CD8-positive, alpha-beta T cell (primary cell): ENCODE measurements at regions of chr11 and their contacts with region 1.

Region 1: DNA sequence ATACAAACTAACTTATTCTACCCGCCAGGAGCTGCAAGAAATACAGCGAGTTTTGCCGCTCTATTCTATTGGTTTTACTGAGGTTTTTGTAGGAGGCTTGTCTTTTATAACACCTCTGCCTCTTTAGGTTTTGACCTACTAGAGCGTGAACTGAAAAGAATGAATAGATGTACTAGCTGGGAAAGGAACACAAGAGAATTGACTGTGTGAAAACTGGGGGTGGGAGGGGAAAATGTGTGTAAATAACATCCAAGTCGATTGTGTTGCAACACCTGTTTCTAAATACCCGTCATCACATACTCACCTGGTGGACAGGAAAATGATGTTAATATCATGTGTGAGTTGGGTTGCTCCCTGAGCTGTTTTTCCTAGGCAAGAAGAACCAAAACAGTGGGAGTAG is 12.9 kb upstream of the JHY start:
- DNase-seq: no peak
- ATAC-seq: no peak
- H3K4me3 ChIP-seq: no peak overlapping the region
- H3K4me3 Mint-ChIP-seq: no peak overlapping the region
- H3K27ac ChIP-seq: no peak overlapping the region
- H3K27ac Mint-ChIP-seq: peak overlapping the region; percentile 66
- H3K4me1 ChIP-seq: no peaks in the 10 kb centered on the region
- H3K4me1 Mint-ChIP-seq: no peaks in the 10 kb centered on the region
- H3K27me3 ChIP-seq: no peaks in the 10 kb centered on the region
- H3K27me3 Mint-ChIP-seq: no peaks in the 10 kb centered on the region
- CTCF ChIP-seq: no peak

Region 2: DNA sequence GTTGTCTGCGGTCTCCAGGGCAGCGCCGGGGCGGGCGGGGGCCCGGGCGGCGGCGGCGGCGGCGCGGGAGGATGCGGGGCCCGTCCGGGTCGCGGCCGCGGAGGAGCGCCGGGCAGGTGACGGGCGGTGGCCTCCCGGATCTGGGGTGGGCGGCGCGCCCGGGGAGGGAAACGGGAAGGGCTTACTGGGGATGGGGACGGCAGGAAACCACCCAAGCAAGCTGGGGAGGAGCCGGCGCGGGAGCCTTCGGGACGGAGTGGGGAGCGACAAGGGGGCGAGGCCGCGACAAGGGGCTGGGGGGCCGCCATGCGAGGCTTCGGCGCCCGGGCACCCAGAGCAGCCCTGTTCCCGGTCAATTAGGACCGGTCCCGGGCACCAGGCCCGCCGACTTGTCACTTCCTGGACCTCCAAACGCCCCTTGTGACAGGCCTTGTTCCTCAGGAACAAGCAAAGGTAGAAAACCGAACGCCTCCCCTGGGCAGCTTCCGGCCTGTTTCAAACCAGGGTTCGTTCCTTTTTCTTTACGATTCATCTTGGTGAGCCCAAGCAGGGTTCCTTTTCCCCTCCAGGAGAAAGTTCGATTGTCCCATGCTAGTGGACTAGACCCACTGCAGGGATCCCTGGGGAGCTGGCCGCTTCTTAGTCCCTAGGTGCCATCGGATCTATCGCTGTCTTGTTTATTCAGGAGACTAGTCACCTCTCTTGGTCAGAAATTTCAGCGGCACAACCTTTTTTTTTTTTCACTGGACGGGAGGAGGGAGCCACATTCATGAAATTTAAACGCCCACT is 13.4 kb after region 1 on chr11:
- CTCF ChIA-PET with region 1: interaction called, 4 read pairs
- POLR2A ChIA-PET with region 1: no interaction called
- intact Hi-C with region 1: loop called in 1 of 2 experiments (anchors 2 kb)
- DNase-seq: peak; percentile 13 to 72 (median 52)
- ATAC-seq: peak; percentile 79
- H3K4me3 ChIP-seq: peak overlapping the region; percentile 71 to 83
- H3K4me3 Mint-ChIP-seq: peak overlapping the region; percentile 85
- H3K27ac ChIP-seq: peak overlapping the region; percentile 64 to 90
- H3K27ac Mint-ChIP-seq: peak overlapping the region; percentile 87
- H3K4me1 ChIP-seq: peaks cover 12% of the 10 kb centered on the region
- H3K4me1 Mint-ChIP-seq: peaks cover 24% of the 10 kb centered on the region
- H3K27me3 ChIP-seq: no peaks in the 10 kb centered on the region
- H3K27me3 Mint-ChIP-seq: no peaks in the 10 kb centered on the region
- CTCF ChIP-seq: no peak